ENCODE measurements at regions of chr15 and their contacts with region 1.

Region 1: DNA sequence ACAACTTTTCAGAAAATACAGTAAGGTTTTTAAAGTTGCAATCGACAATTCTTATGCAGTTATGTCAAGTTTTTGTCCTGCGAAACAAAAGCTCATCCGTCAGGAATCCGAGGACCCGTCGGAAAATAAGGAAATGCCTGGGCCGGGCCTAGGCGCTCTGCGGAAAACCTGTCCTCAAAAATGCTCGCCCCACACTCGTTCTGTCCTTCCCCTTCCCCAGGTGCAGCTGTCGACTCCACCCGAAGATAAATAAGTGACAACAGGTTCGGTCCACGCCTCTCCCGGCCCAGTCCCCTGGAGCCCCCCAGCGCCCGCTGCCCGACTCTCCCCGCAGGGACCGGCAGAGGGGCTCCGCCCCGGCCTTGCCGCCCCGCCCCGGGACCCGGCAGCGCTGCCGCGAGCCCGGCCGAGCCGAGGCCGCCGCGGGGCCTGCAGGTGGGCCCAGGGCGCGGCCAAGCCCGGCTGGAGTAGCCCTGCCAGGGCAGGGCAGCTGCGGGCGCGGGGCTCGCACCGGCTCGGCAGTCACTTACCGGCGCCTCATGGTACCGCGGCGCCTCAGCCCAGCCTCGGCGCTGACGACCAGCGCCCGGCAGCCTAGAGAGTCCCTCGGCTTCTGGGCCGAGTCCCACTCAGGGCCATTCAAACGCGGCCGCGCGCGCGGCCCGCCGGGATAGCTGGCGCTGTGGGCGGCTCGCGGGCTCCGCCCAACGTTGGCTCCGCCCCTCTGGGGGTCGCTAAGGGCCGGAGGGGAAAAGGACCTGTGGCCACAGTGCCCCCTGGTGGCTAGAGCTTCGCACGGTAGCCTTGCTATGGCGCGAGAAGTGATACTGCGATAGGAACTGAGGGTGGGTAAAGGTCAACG is at the start of gene KATNBL1:
- DNase-seq: peak; percentile 89 to 99 (median 96)

Region 2: DNA sequence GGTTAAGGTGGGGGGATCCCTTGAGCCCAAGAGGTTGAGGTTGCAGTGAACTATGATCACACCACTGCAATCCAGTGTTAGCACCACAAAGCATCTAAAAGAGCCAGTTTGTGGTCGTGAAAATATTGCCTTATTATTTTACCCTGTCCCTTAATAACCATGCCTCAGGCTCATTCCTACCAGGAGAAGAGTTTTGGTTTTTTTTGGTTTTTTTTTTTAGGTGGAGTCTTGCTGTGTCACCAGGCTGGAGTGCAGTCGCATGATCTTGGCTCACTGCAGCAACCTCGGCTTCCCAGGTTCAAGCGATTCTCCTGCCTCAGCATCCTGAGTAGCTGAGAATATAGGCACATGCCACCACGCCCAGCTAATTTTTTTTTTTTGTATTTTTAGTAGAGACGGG is 152.7 kb before region 1 on chr15:
- intact Hi-C with region 1: loop called (anchors 1 kb)
- DNase-seq: no peak

Region 3: DNA sequence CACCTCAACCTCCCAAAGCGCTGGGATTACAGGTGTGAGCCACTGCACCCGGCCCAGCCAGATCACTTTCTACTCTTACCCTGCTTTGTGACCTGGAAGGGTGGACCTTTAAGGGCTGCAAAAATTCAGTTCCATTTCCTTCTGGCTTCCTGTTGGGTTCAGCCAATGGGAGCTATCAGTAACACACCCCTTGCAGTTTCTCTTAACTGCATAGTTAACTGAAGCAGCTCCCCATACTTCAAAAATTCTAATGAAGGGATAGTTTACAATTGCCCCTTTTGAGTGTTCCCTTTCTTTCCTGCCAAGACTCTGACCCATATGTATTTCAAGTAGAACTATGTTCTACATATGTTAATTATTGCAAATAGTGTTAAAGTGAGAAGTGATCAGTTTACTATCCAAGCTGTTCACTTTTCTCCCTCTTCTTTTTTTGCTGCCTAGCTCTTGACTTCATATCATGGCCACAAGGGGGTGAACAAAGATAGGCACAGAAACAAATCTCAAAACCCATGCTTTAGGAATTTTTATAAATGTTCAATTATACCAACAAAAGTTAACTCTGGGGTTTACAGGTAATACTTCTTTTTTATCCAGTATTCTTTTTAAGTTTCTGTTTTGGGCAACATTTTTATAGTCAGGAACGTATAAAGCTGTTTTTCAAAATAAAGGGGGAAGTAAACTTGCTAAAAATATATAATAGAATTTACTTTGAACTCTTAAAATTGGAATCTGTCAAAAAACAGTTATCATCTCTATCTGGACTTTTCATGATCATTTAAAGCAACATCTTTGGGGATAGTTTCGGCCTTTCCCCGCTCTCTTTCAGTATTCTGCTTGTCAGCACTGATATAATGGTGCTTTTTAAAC is 99.6 kb before region 1 on chr15:
- intact Hi-C with region 1: loop called (anchors 5 kb)
- DNase-seq: no peak